Pancreas (tissue), 10 donors: ENCODE measurements at regions of chr20 and their contacts with region 1.

Region 1: GRCh38 chr20:63032861-63033634 is 26.3 kb upstream of the BHLHE23 start:
- DNase-seq: peak in 1 of 6 donors; percentile 57
- ATAC-seq: no peak
- H3K4me3 ChIP-seq: no peak overlapping the region
- H3K27ac ChIP-seq: no peak overlapping the region
- H3K4me1 ChIP-seq: no peaks in the 10 kb centered on the region
- H3K27me3 ChIP-seq: peaks cover 0 to 25% (median 0%) of the 10 kb centered on the region in 4 donors
- CTCF ChIP-seq: no peak

Region 2: DNA sequence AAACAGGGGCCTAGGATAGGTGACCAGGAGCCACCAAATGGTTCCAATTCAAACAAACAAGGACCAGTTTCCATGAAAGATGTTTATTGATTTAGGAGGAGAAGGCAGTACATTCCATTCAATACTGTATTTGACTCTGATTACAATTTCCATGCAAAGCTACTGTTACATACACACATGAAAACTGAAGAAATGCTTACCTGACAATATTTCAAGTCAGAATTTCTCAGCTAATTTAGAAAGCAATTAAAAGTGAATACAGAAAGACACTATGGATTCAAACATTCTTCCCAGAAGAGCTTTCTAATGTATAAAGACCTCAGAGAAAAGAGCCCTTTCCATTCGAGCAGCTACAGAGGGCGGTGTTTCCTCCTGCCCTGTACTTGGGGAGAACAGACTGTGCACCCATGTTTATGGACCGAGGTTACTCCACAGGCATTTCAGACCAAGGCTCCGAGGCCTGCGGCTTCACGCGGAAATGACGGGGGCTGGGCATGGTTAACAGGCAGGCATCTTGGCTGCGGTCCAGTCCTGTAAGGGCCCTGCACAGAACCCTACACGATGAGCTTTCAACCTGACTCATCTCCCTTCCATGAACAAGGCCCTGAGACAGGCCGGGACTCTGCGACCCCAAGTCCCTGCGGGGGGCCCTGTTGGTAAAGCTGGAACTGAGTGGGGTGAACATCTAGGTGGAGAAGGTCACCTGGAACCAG is 145.7 kb before region 1 on chr20:
- intact Hi-C with region 1: no loop called
- DNase-seq: no peak
- ATAC-seq: peak in 2 of 4 donors; percentile 51 to 53
- H3K4me3 ChIP-seq: no peak overlapping the region
- H3K27ac ChIP-seq: no peak overlapping the region
- H3K4me1 ChIP-seq: no peaks in the 10 kb centered on the region
- H3K27me3 ChIP-seq: no peaks in the 10 kb centered on the region
- CTCF ChIP-seq: no peak

Region 3: GRCh38 chr20:63090682-63091579 is 57.9 kb after region 1 on chr20:
- intact Hi-C with region 1: loop called in 1 of 3 experiments (anchors 10 kb)
- DNase-seq: peak in 3 of 6 donors; percentile 12 to 53 (median 36)
- ATAC-seq: no peak
- H3K4me3 ChIP-seq: no peak overlapping the region
- H3K27ac ChIP-seq: no peak overlapping the region
- H3K4me1 ChIP-seq: no peaks in the 10 kb centered on the region
- H3K27me3 ChIP-seq: no peaks in the 10 kb centered on the region
- CTCF ChIP-seq: no peak

Region 4: GRCh38 chr20:63178889-63179686 is 146.0 kb after region 1 on chr20:
- intact Hi-C with region 1: no loop called
- DNase-seq: peak in 4 of 6 donors; percentile 8 to 76 (median 36)
- ATAC-seq: peak; percentile 31 to 69 (median 41)
- H3K4me3 ChIP-seq: peak overlapping the region in 2 of 4 donors; percentile 8 to 36
- H3K27ac ChIP-seq: no peak overlapping the region
- H3K4me1 ChIP-seq: peaks cover 0 to 10% (median 0%) of the 10 kb centered on the region in 3 donors
- H3K27me3 ChIP-seq: peaks cover 0 to 51% (median 15%) of the 10 kb centered on the region in 4 donors
- CTCF ChIP-seq: peak in 1 of 4 donors; percentile 8